AG04449 (cell line): ENCODE measurements at regions of chr7 and their contacts with region 1.

Region 1: GRCh38 chr7:136104269-136104603 is 127.1 kb upstream of the MTPN start:
- DNase-seq: no peak
- H3K4me3 ChIP-seq: no peak overlapping the region
- CTCF ChIP-seq: no peak

Region 2: DNA sequence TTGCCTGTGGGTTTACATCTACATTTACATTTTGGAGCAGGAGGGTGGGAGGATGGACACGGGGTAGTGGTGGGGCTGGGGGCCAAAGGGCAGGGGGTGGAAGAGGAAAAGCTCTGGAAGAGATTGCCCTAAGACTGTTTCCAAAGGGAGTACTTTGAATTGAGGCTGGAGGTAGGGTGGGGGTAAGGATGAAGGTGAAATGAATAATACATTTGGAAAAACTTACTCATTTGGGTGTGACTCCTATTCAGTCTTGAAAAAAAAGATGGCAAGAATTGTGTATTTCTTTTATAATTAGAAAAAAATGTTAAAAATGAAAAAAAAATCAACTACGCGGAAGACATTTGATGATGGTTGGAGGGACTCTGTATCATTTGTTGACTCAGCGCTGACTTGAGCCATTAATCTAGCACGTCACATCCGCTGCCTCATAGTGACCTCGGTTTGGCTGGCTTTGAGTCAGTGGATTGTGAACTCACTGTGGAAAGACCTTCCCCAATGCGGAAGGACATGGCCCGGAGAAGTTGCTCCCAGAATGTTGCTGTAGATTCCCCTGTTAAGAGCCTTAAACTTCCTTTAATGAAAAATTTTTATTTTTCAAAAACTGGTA is 358.4 kb before region 1 on chr7:
- CTCF ChIA-PET with region 1: no interaction called
- POLR2A ChIA-PET with region 1: no interaction called
- DNase-seq: peak; percentile 91
- H3K4me3 ChIP-seq: no peak overlapping the region
- CTCF ChIP-seq: no peak

Region 3: GRCh38 chr7:136016649-136017395 is 87.4 kb before region 1 on chr7:
- CTCF ChIA-PET with region 1: no interaction called
- POLR2A ChIA-PET with region 1: no interaction called
- DNase-seq: no peak
- H3K4me3 ChIP-seq: no peak overlapping the region
- CTCF ChIP-seq: no peak

Region 4: DNA sequence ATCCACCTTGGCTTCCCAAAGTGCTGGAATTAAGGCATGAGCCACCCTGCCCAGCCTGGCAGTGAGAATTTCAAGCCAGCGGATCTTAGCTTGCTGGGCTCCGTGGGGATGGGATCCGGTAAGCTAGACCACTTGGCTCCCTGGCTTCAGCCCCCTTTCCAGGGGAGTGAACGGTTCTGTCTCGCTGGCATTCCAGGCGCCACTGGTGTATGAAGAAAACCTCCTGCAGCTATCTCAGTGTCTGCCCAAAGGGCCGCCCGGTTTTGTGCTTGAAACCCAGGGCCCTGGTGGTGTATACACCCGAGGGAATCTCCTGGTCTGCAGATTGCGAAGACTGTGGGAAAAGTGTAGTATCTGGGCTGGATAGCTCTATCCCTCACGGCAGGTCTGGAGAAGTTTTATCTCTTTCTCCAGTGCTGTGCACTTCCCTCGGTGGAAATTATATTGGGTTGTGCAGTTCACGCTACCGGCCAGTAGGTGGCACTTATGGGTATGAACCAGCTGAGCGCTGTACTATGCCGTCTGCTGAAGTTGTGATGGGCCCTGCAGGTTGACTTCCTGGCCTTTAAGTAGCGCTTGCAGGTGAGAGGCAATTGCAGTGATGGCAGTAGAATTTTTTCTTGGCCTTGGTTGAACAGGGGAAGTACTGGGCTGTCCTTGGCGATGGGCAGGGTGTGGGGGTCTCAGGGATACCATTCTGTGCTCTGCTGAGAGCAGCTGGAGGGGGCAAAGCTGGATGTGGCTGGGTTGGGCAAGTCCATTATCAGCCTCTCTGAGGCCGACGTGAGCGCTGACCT is 10.9 kb after region 1 on chr7:
- CTCF ChIA-PET with region 1: interaction called, 18 read pairs
- POLR2A ChIA-PET with region 1: no interaction called
- DNase-seq: no peak
- H3K4me3 ChIP-seq: no peak overlapping the region
- CTCF ChIP-seq: peak; percentile 71